ENCODE measurements at regions of chr14 and their contacts with region 1.

Region 1: DNA sequence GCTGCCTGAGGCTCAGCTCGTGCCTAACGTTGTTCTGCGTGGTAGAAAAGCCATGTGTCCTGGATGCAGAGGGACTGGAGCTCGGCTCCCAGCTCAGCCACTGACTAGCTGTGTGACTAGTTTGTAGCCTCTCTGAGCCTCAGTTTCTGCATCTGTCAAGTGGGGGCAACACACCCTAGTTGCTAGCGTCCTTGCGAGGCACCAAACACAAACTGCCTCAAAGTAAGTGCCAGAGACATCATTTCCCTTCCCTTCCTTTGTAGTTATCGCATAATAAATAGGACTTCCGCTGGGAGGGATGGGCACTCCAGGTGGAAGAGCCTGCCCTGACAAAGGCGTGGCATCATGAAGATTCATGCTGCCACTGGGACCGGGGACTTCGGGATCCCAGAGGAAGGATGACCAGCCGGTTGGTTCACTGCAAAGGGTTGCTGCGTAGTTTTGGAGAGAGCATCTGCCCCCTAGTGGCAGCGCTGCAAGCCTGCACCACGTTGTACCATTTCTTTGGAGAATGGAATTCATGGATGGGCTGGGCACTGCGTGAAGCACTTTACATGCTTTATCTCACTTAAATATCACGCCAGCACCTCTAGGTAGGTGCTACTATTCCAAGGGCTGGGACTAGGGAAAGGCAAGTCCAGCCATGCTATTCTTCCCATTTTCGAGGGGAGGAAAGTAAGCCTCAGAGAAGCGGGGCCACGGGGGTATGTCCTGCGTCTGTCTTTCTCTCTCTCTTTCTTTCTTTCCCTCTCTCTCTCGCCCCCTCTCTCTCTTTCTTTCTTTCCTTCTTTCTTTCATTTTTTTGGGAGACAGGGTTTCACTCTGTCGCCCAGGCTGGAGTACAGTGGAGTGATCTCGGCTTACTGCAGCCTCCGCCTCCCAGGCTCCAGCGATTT is 4.6 kb downstream of the CCDC197 start:
- DNase-seq: peak; percentile 48 to 74 (median 68)
- H3K4me3 ChIP-seq: peak overlapping the region in 2 of 7 experiments; percentile 36 to 45
- H3K27ac ChIP-seq: no peak overlapping the region
- H3K4me1 ChIP-seq: peaks cover 0 to 7% (median 3%) of the 10 kb centered on the region in 4 experiments
- H3K27me3 ChIP-seq: peaks cover 0 to 4% (median 0%) of the 10 kb centered on the region in 5 experiments

Region 2: GRCh38 chr14:93939304-93940229 is 62.2 kb before region 1 on chr14:
- CTCF ChIA-PET with region 1: interaction called, 76 read pairs
- POLR2A ChIA-PET with region 1: no interaction called
- DNase-seq: peak; percentile 81 to 87 (median 84)
- H3K4me3 ChIP-seq: peak overlapping the region in 6 of 7 experiments; percentile 23 to 73 (median 42)
- H3K27ac ChIP-seq: no peak overlapping the region
- H3K4me1 ChIP-seq: peaks cover 0 to 9% (median 7%) of the 10 kb centered on the region in 4 experiments
- H3K27me3 ChIP-seq: peaks cover 0 to 17% (median 7%) of the 10 kb centered on the region in 5 experiments

Region 3: DNA sequence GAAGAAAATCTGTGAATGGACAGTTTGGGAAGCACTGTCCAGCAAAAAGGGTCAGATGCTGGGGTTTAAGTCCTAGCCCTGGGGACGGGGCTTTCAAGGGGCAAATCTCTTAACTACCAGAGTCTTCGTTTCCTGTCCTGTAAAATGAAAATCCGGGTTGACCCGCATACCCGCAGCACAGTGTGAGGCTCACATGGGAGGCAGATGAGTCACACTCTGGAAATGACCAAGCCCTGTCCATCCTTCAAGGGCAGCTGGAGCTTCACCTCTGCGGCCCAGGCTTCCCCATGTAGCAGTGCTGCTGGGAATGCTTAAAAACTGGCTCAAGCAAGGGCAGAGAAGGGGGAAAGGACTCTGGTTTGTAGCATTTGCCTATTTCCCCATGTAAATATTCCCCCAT is 55.6 kb before region 1 on chr14:
- CTCF ChIA-PET with region 1: interaction called, 39 read pairs
- POLR2A ChIA-PET with region 1: no interaction called
- DNase-seq: no peak
- H3K4me3 ChIP-seq: no peak overlapping the region
- H3K27ac ChIP-seq: no peak overlapping the region
- H3K4me1 ChIP-seq: no peaks in the 10 kb centered on the region
- H3K27me3 ChIP-seq: no peaks in the 10 kb centered on the region

Region 4: DNA sequence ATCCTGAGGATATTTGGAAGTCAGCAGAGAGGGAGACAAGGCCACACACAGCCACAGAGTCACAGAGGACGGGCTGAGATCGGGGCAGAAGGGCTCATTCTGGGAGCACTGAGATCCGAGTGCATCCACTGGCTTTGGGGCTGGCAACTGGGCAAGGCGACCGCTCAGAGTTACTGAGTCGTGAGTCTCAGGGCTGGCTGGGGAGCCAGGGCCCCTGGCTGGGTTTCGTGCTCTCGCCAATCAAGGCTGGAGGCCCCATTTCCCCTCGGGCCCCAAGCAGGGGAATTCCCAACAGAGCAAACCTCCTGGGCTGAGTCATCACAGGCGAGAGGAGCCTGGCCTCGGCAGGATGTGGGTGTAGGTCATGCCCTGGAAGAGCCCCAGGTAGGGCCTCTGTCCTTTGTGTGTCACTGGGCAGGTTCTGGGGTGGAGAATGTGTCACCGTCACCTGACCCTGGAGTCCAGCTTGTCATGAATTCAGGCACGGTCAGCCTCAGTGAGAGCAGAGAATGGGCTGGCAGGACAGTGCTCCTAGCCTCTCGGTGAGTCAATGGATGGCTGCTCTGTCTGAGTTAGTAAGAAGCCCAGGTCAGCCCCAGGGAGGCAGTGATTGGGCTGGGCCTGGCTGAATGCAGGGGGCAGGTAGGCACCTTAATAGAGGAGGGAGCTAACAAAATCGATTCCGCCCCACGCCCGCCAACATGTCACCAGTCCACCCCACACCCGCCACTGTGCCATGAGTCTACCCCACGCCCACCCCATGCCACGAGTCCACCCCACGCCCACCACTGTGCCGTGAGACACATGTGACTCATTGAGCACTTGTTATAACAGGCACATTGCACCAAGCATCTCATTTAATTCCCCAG is 42.3 kb before region 1 on chr14:
- CTCF ChIA-PET with region 1: interaction called, 15 read pairs
- POLR2A ChIA-PET with region 1: interaction called, 3 read pairs
- DNase-seq: peak; percentile 91 to 98 (median 98)
- H3K4me3 ChIP-seq: peak overlapping the region in 2 of 7 experiments; percentile 50 to 56
- H3K27ac ChIP-seq: peak overlapping the region in 1 of 2 experiments; percentile 77
- H3K4me1 ChIP-seq: peaks cover 10 to 81% (median 74%) of the 10 kb centered on the region in 4 experiments
- H3K27me3 ChIP-seq: no peaks in the 10 kb centered on the region

Region 5: GRCh38 chr14:93970549-93970946 is 31.2 kb before region 1 on chr14:
- CTCF ChIA-PET with region 1: interaction called, 23 read pairs
- POLR2A ChIA-PET with region 1: no interaction called
- DNase-seq: peak; percentile 48 to 72 (median 71)
- H3K4me3 ChIP-seq: peak overlapping the region; percentile 44 to 86 (median 67)
- H3K27ac ChIP-seq: peak overlapping the region in 1 of 2 experiments; percentile 27
- H3K4me1 ChIP-seq: peaks cover 5 to 43% (median 34%) of the 10 kb centered on the region in 4 experiments
- H3K27me3 ChIP-seq: peaks cover 0 to 2% (median 0%) of the 10 kb centered on the region in 5 experiments

Region 6: DNA sequence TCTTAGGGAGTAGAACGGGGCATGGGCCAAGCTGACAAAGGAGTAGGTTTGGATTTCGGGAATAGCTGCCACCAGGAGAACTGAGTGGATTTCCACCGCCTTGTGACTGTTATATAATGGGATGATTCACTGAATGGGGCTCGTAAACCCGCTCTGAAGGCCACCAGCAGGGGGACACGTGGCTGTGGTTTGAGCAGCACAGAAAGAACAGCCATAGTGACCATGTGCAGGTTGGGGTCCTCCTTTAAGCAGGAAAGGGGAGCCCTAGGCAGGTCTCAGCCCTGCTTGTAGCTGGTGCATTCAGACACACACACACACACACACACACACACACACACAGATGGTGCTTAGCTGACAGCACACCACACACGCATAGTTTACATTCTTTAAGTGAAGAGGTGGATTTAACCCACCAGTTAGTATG is 16.8 kb before region 1 on chr14:
- CTCF ChIA-PET with region 1: interaction called, 130 read pairs
- POLR2A ChIA-PET with region 1: no interaction called
- DNase-seq: peak in 2 of 3 donors; percentile 45
- H3K4me3 ChIP-seq: no peak overlapping the region
- H3K27ac ChIP-seq: no peak overlapping the region
- H3K4me1 ChIP-seq: peaks cover 0 to 3% (median 0%) of the 10 kb centered on the region in 4 experiments
- H3K27me3 ChIP-seq: peaks cover 0 to 9% (median 0%) of the 10 kb centered on the region in 5 experiments